MCF 10A (cell line): ENCODE measurements at regions of chr6 and their contacts with region 1.

Region 1: GRCh38 chr6:105384008-105384407 is 18.9 kb downstream of the PREP start:
- DNase-seq: peak; percentile 79
- H3K4me3 Mint-ChIP-seq: no peak overlapping the region
- H3K27ac Mint-ChIP-seq: peak overlapping the region; percentile 11
- H3K4me1 Mint-ChIP-seq: peaks cover 33% of the 10 kb centered on the region
- H3K27me3 Mint-ChIP-seq: no peaks in the 10 kb centered on the region
- CTCF ChIP-seq: no peak

Region 2: DNA sequence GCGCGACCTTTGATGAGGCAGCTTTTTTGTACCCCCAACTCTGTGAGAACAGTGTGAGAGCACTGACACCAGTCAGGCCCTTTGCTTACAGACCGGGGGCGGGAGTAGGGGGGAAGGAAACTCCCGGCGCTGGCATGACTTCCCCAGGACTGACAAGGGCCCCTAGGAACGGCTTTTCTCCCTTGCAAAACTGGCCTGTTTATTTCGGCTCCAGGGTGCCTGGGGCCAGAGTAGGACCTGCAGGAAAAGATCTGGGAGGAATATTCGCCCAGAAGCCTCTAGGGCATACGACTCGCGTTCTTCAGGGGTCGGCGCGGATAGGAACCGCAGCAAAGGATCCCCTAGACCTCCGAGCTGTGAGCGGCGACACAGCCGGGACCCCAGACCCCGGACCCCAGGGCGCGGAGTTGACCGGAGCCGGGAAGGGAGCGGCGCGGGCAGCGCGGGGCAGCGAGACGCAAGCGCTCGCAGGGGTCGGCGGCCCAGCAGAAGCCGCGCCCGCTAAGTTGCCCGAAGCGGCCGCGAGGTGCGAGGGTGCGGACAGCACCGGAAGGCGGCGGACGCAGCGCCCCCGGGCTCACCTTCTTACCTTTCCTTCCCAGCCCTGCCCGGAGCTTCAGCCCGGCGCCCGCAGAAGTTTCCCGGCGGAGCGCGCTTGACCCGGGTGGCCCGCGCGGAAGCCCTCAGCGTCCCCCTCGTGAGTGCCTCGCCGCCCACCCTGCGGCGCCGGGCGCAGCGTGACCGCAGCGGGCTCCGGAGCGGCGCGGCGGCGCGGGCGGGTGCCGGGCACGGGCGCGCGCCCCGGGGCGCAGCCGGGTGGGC is 204.6 kb before region 1 on chr6 and contains the start of gene POPDC3:
- CTCF ChIA-PET with region 1: no interaction called
- POLR2A ChIA-PET with region 1: no interaction called
- intact Hi-C with region 1: no loop called
- DNase-seq: peak; percentile 56
- H3K4me3 Mint-ChIP-seq: peak within 1 kb of the TSS; percentile 72
- H3K27ac Mint-ChIP-seq: peak within 1 kb of the TSS; percentile 69
- H3K4me1 Mint-ChIP-seq: peaks cover 16% of the 10 kb centered on the region
- H3K27me3 Mint-ChIP-seq: no peaks in the 10 kb centered on the region
- CTCF ChIP-seq: no peak
- total RNA-seq, gene POPDC3: 7.3 and 7.9 TPM in 2 replicates

Region 3: GRCh38 chr6:105397987-105398386 is 14.0 kb after region 1 on chr6:
- CTCF ChIA-PET with region 1: interaction called, 5 read pairs
- POLR2A ChIA-PET with region 1: interaction called, 13 read pairs
- intact Hi-C with region 1: no loop called
- DNase-seq: no peak
- H3K4me3 Mint-ChIP-seq: no peak overlapping the region
- H3K27ac Mint-ChIP-seq: no peak overlapping the region
- H3K4me1 Mint-ChIP-seq: peaks cover 30% of the 10 kb centered on the region
- H3K27me3 Mint-ChIP-seq: no peaks in the 10 kb centered on the region
- CTCF ChIP-seq: no peak